WTC11 (cell line): ENCODE measurements at regions of chr1 and their contacts with region 1.

Region 1: GRCh38 chr1:42657971-42658879 is at the start of gene PPIH:
- DNase-seq: peak; percentile 95
- ATAC-seq: peak; percentile 99
- H3K4me3 Mint-ChIP-seq: peak within 1 kb of the TSS; percentile 96
- H3K27ac Mint-ChIP-seq: peak within 1 kb of the TSS; percentile 98
- H3K4me1 Mint-ChIP-seq: peaks cover 24% of the 10 kb centered on the region
- H3K27me3 Mint-ChIP-seq: peaks cover 15% of the 10 kb centered on the region
- CTCF ChIP-seq: no peak
- total RNA-seq, gene PPIH: 68.5 to 73.1 TPM (median 69.3 TPM) in 3 replicates

Region 2: GRCh38 chr1:42576935-42577334 is 81.3 kb before region 1 on chr1:
- CTCF ChIA-PET with region 1: interaction called, 11 read pairs
- POLR2A ChIA-PET with region 1: no interaction called
- DNase-seq: no peak
- ATAC-seq: no peak
- H3K4me3 Mint-ChIP-seq: no peak overlapping the region
- H3K27ac Mint-ChIP-seq: no peak overlapping the region
- H3K4me1 Mint-ChIP-seq: no peaks in the 10 kb centered on the region
- H3K27me3 Mint-ChIP-seq: peaks cover 4% of the 10 kb centered on the region; the same call in 1 of the 2 replicates
- CTCF ChIP-seq: no peak

Region 3: DNA sequence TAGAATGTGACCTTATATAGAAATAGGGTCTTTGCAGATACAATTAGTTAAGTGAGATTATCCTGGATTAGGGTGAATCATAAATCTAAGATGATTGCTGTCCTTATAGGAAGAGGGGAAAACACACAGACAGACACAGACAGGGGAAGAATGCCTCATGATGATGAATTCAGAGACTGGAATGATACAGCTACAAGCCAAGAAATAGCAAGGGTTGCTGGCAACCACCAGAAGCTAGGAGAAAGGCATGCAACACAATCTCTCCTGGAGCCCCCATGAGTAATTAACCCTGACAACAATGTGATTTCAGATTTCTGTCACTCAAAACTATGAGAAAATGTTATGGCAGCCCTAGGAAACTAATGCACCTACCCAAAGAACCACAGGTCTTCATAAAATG is 19.1 kb before region 1 on chr1:
- CTCF ChIA-PET with region 1: no interaction called
- POLR2A ChIA-PET with region 1: no interaction called
- DNase-seq: no peak
- ATAC-seq: no peak
- H3K4me3 Mint-ChIP-seq: no peak overlapping the region
- H3K27ac Mint-ChIP-seq: no peak overlapping the region
- H3K4me1 Mint-ChIP-seq: no peaks in the 10 kb centered on the region
- H3K27me3 Mint-ChIP-seq: peaks cover 10% of the 10 kb centered on the region
- CTCF ChIP-seq: no peak

Region 4: GRCh38 chr1:42681741-42682483 is 23.7 kb after region 1 on chr1 and contains the start of gene YBX1:
- CTCF ChIA-PET with region 1: interaction called, 9 read pairs
- POLR2A ChIA-PET with region 1: interaction called, 13 read pairs
- DNase-seq: peak; percentile 96
- ATAC-seq: peak; percentile 96
- H3K4me3 Mint-ChIP-seq: peak within 1 kb of the TSS; percentile 97
- H3K27ac Mint-ChIP-seq: peak within 1 kb of the TSS; percentile 93
- H3K4me1 Mint-ChIP-seq: peaks cover 45% of the 10 kb centered on the region
- H3K27me3 Mint-ChIP-seq: no peaks in the 10 kb centered on the region; the same call in 1 of the 2 replicates
- CTCF ChIP-seq: no peak
- total RNA-seq, gene YBX1: 1,098 to 1,172 TPM (median 1,151 TPM) in 3 replicates

Region 5: GRCh38 chr1:42877380-42877779 is 219.2 kb after region 1 on chr1:
- CTCF ChIA-PET with region 1: no interaction called
- POLR2A ChIA-PET with region 1: no interaction called
- DNase-seq: peak; percentile 39
- ATAC-seq: peak; percentile 50
- H3K4me3 Mint-ChIP-seq: no peak overlapping the region
- H3K27ac Mint-ChIP-seq: no peak overlapping the region
- H3K4me1 Mint-ChIP-seq: peaks cover 8% of the 10 kb centered on the region
- H3K27me3 Mint-ChIP-seq: peaks cover 12% of the 10 kb centered on the region
- CTCF ChIP-seq: no peak